Heart left ventricle (tissue), 16 donors: ENCODE measurements at regions of chr6 and their contacts with region 1.

Region 1: GRCh38 chr6:138403801-138404661 is at the start of gene HEBP2:
- DNase-seq: peak; percentile 95 to 97 (median 97)
- ATAC-seq: peak; percentile 94 to 96 (median 95)
- H3K4me3 ChIP-seq: peak within 1 kb of the TSS; percentile 71 to 92 (median 83)
- H3K27ac ChIP-seq: peak within 1 kb of the TSS; percentile 78 to 98 (median 96)
- H3K4me1 ChIP-seq: peaks cover 0 to 27% (median 14%) of the 10 kb centered on the region in 12 donors
- H3K27me3 ChIP-seq: no peaks in the 10 kb centered on the region
- CTCF ChIP-seq: peak; percentile 47 to 85 (median 75)
- POLR2A ChIP-seq: peak; percentile 12 to 84
- total RNA-seq, gene HEBP2: 45.1 to 110 (median 92.6) TPM

Region 2: GRCh38 chr6:138109042-138109997 is 294.7 kb before region 1 on chr6:
- intact Hi-C with region 1: loop called in 6 of 10 experiments (anchors 5 to 10 kb)
- DNase-seq: peak in 4 of 5 donors; percentile 44 to 57 (median 50)
- ATAC-seq: peak in 1 of 4 donors; percentile 32
- H3K4me3 ChIP-seq: no peak overlapping the region
- H3K27ac ChIP-seq: no peak overlapping the region
- H3K4me1 ChIP-seq: peaks cover 0 to 19% (median 6%) of the 10 kb centered on the region in 12 donors
- H3K27me3 ChIP-seq: peaks cover 0 to 38% (median 5%) of the 10 kb centered on the region in 9 donors
- CTCF ChIP-seq: peak; percentile 91 to 99 (median 96)
- POLR2A ChIP-seq: no peak

Region 3: GRCh38 chr6:138161338-138162110 is 242.5 kb before region 1 on chr6 and contains the start of gene ARFGEF3:
- intact Hi-C with region 1: no loop called
- DNase-seq: peak; percentile 44 to 72 (median 63)
- ATAC-seq: peak; percentile 46 to 94 (median 89)
- H3K4me3 ChIP-seq: peak within 1 kb of the TSS; percentile 44 to 83 (median 70)
- H3K27ac ChIP-seq: peak within 1 kb of the TSS in 7 of 12 donors; percentile 17 to 69 (median 36)
- H3K4me1 ChIP-seq: peaks cover 0 to 22% (median 13%) of the 10 kb centered on the region in 12 donors
- H3K27me3 ChIP-seq: peaks cover 0 to 46% (median 0%) of the 10 kb centered on the region in 9 donors
- CTCF ChIP-seq: no peak
- POLR2A ChIP-seq: no peak
- total RNA-seq, gene ARFGEF3: 1.0 to 11.9 (median 2.8) TPM

Region 4: GRCh38 chr6:138307816-138308728 is 96.0 kb before region 1 on chr6:
- intact Hi-C with region 1: loop called in 4 of 10 experiments (anchors 2 to 5 kb)
- DNase-seq: peak; percentile 19 to 67 (median 53)
- ATAC-seq: peak; percentile 80 to 92 (median 88)
- H3K4me3 ChIP-seq: no peak overlapping the region
- H3K27ac ChIP-seq: peak overlapping the region in 10 of 12 donors; percentile 6 to 89 (median 61)
- H3K4me1 ChIP-seq: peaks cover 0 to 18% (median 0%) of the 10 kb centered on the region in 12 donors
- H3K27me3 ChIP-seq: no peaks in the 10 kb centered on the region
- CTCF ChIP-seq: peak in 6 of 12 donors; percentile 17 to 45 (median 34)
- POLR2A ChIP-seq: no peak

Region 5: GRCh38 chr6:138692058-138692977 is 288.3 kb after region 1 on chr6:
- intact Hi-C with region 1: loop called in 1 of 10 experiments (anchors 10 kb)
- DNase-seq: peak; percentile 72 to 91 (median 82)
- ATAC-seq: peak; percentile 61 to 90 (median 82)
- H3K4me3 ChIP-seq: peak overlapping the region; percentile 36 to 91 (median 72)
- H3K27ac ChIP-seq: peak overlapping the region; percentile 50 to 82 (median 68)
- H3K4me1 ChIP-seq: peaks cover 0 to 19% (median 4%) of the 10 kb centered on the region in 12 donors
- H3K27me3 ChIP-seq: no peaks in the 10 kb centered on the region
- CTCF ChIP-seq: peak; percentile 72 to 97 (median 88)
- POLR2A ChIP-seq: no peak